Naive thymus-derived CD4-positive, alpha-beta T cell (primary cell): ENCODE measurements at regions of chr16 and their contacts with region 1.

Region 1: DNA sequence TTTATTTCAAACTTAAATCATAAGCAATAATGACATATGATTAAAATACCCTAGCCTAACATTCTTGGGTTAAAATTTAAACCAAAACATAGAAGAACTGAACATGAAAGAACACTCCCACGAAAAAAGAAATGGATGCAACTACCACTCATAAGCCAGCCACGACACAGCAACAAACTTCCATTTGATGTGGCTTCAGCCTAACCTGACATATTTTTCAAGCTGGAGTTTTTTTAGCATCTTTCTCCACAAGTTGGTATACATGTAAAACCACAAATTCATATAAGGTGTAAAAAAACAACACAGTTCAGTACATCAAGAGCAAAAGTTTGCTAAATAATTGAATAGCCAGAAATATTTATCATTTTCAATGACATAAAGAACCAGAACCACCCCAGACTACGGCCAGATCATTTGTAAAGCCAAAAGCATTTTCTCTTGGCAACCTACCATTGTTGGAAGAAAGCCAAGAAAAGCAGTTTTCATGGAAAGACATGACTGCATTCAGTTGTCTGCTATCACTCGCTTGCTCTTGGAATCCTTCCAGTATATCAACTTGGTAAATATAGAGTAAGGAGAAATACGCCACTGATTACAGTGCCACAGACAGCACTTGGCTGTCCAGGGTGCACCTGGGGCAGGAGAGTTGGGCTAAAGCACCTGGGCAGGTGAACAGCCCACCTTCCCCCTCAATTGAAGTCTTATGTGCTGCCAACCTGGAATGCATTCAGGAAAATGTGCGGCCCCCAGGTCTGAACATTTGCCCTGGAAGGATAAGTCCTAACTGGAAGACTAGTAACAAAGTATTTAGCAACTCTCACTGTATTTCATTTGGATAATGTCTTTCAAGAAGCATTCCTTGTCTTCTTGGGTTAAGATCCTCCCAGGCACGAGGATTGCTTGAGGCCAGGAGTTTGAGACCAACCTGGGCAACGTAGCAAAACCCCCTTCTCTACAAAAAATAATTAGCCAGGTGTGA is 60.5 kb downstream of the CREBBP start:
- DNase-seq: peak in 7 of 9 donors; percentile 24 to 54 (median 33)
- ATAC-seq: peak; percentile 57
- H3K4me3 ChIP-seq: no peak overlapping the region
- H3K4me3 Mint-ChIP-seq: peak overlapping the region; percentile 39 to 80 (median 64)
- H3K27ac ChIP-seq: no peak overlapping the region
- H3K27ac Mint-ChIP-seq: peak overlapping the region in 7 of 9 donors; percentile 5 to 82 (median 53)
- H3K4me1 ChIP-seq: peaks cover 58 to 81% of the 10 kb centered on the region in 2 donors
- H3K4me1 Mint-ChIP-seq: peaks cover 71 to 96% (median 94%) of the 10 kb centered on the region in 7 donors
- H3K27me3 ChIP-seq: no peaks in the 10 kb centered on the region
- H3K27me3 Mint-ChIP-seq: no peaks in the 10 kb centered on the region

Region 2: DNA sequence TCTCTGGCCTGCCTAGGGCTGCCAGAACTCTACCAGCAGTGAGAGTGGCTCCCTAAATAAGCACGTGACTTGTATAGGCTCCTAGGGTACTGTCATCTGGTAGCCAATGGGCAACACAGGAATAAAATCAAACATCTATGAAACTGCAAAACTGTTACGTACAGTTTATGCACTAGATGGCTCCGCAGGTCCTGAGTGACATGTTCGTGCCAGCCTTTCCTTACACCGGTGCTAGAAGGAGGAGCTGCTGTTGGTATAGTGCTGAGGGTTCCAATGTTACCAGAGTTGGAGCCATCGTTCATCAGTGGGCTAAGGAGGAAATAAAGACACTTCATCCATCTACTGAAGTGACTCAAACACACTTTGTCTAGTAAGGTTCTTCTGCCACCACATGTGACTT is 39.5 kb before region 1 on chr16:
- CTCF ChIA-PET with region 1: no interaction called
- POLR2A ChIA-PET with region 1: no interaction called
- intact Hi-C with region 1: loop called in 1 of 2 experiments (anchors 5 kb)
- DNase-seq: peak in 4 of 9 donors; percentile 8 to 41 (median 24)
- ATAC-seq: peak; percentile 57
- H3K4me3 ChIP-seq: no peak overlapping the region
- H3K4me3 Mint-ChIP-seq: no peak overlapping the region
- H3K27ac ChIP-seq: no peak overlapping the region
- H3K27ac Mint-ChIP-seq: peak overlapping the region in 5 of 9 donors; percentile 13 to 76 (median 65)
- H3K4me1 ChIP-seq: no peaks in the 10 kb centered on the region
- H3K4me1 Mint-ChIP-seq: peaks cover 7 to 39% (median 22%) of the 10 kb centered on the region in 7 donors
- H3K27me3 ChIP-seq: no peaks in the 10 kb centered on the region
- H3K27me3 Mint-ChIP-seq: no peaks in the 10 kb centered on the region

Region 3: DNA sequence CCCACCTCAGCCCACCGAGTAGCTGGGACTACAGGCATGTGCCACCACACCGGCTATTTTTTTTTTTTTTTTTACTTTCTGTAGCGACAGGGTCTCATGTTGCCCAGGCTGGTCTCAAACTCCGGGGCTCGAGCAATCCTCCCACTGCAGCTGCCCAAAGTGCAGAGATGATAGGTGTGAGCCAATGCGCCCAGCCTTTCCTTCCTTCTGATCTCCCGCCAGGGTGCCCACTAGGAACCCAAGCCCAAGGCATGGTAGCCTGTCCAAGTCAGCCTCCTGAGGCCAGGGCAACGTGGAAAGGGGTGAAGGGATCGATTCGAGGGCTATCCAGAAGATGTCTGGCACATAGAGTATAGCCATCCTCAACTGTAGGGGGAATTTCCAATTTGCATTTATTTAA is 70.1 kb after region 1 on chr16:
- CTCF ChIA-PET with region 1: no interaction called
- POLR2A ChIA-PET with region 1: no interaction called
- intact Hi-C with region 1: no loop called
- DNase-seq: no peak
- ATAC-seq: no peak
- H3K4me3 ChIP-seq: no peak overlapping the region
- H3K4me3 Mint-ChIP-seq: no peak overlapping the region
- H3K27ac ChIP-seq: no peak overlapping the region
- H3K27ac Mint-ChIP-seq: no peak overlapping the region
- H3K4me1 ChIP-seq: no peaks in the 10 kb centered on the region
- H3K4me1 Mint-ChIP-seq: peaks cover 0 to 2% (median 0%) of the 10 kb centered on the region in 7 donors
- H3K27me3 ChIP-seq: no peaks in the 10 kb centered on the region
- H3K27me3 Mint-ChIP-seq: peaks cover 6 to 30% (median 15%) of the 10 kb centered on the region in 5 donors

Region 4: DNA sequence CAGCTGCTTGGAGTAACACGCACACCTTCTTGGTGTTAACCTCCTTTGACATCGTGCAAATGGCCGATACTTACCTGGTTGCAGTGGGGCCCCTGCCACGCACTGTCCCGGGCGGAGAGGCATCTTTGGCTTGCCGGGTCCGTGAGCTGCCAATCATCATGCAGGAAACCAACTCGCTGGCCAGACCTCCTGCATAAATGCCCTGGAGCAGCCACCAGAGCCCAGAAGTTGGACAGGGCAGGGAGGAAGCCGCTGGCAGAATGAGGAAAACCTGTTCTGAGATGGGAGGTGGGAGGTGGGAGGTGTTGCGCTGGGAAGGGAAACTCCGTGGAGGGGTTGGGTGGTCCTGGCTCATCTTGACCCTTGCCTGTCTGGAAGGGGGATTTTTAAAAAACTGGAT is 102.2 kb after region 1 on chr16:
- CTCF ChIA-PET with region 1: no interaction called
- POLR2A ChIA-PET with region 1: no interaction called
- intact Hi-C with region 1: no loop called
- DNase-seq: no peak
- ATAC-seq: no peak
- H3K4me3 ChIP-seq: no peak overlapping the region
- H3K4me3 Mint-ChIP-seq: no peak overlapping the region
- H3K27ac ChIP-seq: no peak overlapping the region
- H3K27ac Mint-ChIP-seq: no peak overlapping the region
- H3K4me1 ChIP-seq: no peaks in the 10 kb centered on the region
- H3K4me1 Mint-ChIP-seq: no peaks in the 10 kb centered on the region
- H3K27me3 ChIP-seq: no peaks in the 10 kb centered on the region
- H3K27me3 Mint-ChIP-seq: peaks cover 0 to 21% (median 14%) of the 10 kb centered on the region in 5 donors